ENCODE measurements at regions of chr11 and their contacts with region 1.

Region 1: DNA sequence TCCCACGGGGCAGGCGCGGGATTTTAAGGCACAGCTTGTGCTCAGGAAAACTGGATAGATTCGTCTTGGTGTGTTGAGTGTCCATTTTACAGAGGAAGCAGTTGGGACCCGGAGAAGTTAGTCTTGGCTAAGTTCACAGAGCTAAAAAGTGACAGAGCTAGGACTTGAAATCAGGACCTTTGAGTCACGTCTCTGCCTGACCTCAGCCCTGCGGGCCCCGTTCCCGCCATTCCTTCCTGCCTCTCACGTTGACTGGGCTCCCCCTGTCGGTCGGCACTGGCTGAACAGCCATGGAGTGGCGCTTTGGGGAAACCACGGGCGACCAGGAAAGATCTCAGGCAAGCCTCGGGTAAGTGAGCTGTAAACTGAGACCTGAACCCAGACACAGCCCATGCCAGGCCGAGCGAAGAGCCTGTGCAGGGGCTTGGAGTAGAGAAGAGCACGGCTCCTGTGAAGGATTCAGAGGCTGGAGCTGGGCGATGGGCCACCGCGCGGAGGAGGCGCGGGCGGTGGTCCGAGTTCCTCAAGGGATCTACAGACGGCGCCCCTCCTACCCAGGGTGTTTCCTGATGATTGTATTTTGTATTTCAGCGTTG is 54.1 kb downstream of the WNT11 start:
- DNase-seq: peak; percentile 91
- CTCF ChIP-seq: peak; percentile 99

Region 2: GRCh38 chr11:75797792-75798191 is 354.4 kb before region 1 on chr11:
- CTCF ChIA-PET with region 1: interaction called, 34 read pairs
- POLR2A ChIA-PET with region 1: no interaction called
- DNase-seq: no peak
- CTCF ChIP-seq: no peak

Region 3: GRCh38 chr11:75867775-75868374 is 284.3 kb before region 1 on chr11:
- CTCF ChIA-PET with region 1: interaction called, 13 read pairs
- POLR2A ChIA-PET with region 1: no interaction called
- DNase-seq: peak; percentile 42
- CTCF ChIP-seq: peak; percentile 47

Region 4: DNA sequence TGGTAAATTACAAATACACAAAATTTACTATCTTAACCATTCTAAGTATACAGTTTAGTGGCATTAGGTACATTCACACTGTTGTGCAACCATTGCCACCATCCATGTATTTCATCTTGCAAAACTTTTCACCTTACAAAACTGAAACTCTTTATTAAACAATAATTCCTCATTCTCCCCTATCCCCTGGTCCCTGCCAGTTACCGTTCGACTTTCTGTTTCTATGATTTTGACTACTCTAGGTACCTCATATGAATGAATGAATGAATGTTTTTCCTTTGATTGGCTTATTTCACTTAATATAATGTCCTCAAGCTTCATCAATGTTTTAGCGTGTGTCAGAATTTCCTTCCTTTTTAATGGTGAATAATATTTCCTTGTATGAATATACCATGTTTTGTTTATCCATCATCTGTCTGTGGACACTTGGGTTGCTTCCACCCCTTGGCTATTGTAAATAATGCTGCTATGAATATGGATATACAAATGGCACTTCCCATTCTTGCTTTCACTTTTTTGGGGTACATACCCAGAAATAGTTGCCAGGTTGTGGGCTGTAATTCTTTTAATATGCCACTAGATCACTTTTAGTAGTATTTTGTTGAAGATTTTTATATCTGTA is 244.2 kb before region 1 on chr11:
- CTCF ChIA-PET with region 1: interaction called, 34 read pairs
- POLR2A ChIA-PET with region 1: no interaction called
- DNase-seq: no peak
- CTCF ChIP-seq: no peak

Region 5: GRCh38 chr11:76033699-76034098 is 118.5 kb before region 1 on chr11:
- CTCF ChIA-PET with region 1: no interaction called
- POLR2A ChIA-PET with region 1: no interaction called
- DNase-seq: no peak
- CTCF ChIP-seq: no peak

Region 6: DNA sequence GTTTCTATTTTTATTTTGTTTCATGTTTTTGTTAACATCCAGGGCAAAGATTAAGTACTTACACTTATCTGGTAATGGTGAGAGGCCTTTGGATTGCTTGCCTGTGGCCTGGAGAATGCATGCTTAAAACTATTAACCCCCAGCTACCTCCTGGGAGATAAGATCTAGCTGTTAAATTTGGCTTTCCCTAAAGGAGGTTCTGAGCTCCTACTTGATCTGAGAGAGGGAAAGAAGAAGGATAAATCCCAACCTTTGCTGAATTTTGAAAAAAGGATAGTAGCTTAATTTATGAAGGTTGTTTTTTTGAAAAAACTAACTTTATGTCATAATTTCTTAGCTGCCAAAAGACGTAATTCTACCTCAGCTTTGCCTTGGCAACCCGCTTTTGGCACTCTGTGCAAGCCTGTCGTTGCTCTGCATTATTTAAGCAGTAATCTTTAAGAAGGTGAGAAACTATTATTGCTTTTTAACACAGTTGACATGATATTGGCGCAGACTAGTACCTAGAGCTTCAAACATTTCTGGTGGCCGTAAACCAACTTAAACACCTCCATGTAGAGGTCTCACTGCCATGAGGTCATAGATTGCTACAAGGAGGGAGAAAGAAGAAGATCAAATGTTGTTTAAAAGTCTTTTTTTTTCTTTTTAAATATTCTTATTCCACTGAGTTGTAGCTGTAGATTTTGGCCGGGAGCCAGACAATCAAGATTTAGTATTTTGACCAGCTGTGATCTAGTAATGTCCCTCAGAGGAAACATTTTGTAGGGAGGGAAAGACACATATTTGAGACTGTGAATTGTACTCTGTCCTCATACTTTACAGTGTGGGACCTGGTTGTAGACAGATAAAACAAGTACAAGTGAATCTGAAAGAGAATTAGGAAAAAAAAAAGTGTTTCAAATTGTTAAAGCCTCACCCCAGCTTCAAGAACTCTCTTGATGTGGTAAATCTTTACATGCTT is 20.2 kb before region 1 on chr11:
- CTCF ChIA-PET with region 1: interaction called, 65 read pairs
- POLR2A ChIA-PET with region 1: no interaction called
- DNase-seq: no peak
- CTCF ChIP-seq: no peak

Measured in GM10248 (cell line).